K562 (cell line): ENCODE measurements at regions of chr6 and their contacts with region 1.

Region 1: DNA sequence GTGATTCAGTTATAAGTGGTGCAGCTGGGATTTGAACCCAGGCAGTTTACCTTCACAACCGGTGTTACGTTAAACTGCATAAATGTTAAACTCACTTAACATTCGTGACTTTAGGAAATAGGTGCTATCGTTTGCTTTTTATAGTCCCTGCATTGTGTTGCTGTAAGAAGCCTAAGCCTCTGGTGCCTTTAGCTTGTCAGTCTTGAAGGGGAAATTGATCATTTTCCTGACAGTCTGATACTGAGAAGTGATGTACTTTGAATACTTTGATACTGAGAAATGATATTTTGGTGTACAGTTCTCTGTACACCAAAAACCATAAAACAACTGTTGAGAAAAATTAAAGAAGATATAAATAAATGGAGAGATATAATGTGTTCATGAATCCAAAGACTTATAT is 52.5 kb upstream of the NEDD9 start:
- DNase-seq: no peak
- ATAC-seq: no peak
- H3K4me3 ChIP-seq: no peak overlapping the region
- H3K27ac ChIP-seq: no peak overlapping the region
- H3K4me1 ChIP-seq: no peaks in the 10 kb centered on the region
- H3K27me3 ChIP-seq: peaks cover 0 to 11% of the 10 kb centered on the region in 2 experiments; a peak in 3 of 5 replicates
- CTCF ChIP-seq: no peak
- EP300 ChIP-seq: no peak
- POLR2A ChIP-seq: no peak
- RAD21 ChIP-seq: no peak

Region 2: GRCh38 chr6:11309947-11310665 is 25.1 kb after region 1 on chr6:
- CTCF ChIA-PET with region 1: no interaction called
- POLR2A ChIA-PET with region 1: no interaction called
- in situ Hi-C with region 1: no loop called
- intact Hi-C with region 1: loop called (anchors 1 kb)
- DNase-seq: no peak
- ATAC-seq: no peak
- H3K4me3 ChIP-seq: no peak overlapping the region
- H3K27ac ChIP-seq: no peak overlapping the region
- H3K4me1 ChIP-seq: no peaks in the 10 kb centered on the region
- H3K27me3 ChIP-seq: peaks cover 0 to 10% of the 10 kb centered on the region in 2 experiments; a peak in 1 of 5 replicates
- CTCF ChIP-seq: peak in 1 of 3 experiments; percentile 40; a peak in 3 of 6 replicates
- EP300 ChIP-seq: no peak
- POLR2A ChIP-seq: no peak
- RAD21 ChIP-seq: no peak

Region 3: GRCh38 chr6:11363881-11364576 is 79.0 kb after region 1 on chr6:
- CTCF ChIA-PET with region 1: no interaction called
- POLR2A ChIA-PET with region 1: no interaction called
- in situ Hi-C with region 1: no loop called
- intact Hi-C with region 1: no loop called
- DNase-seq: no peak
- ATAC-seq: no peak
- H3K4me3 ChIP-seq: no peak overlapping the region
- H3K27ac ChIP-seq: no peak overlapping the region
- H3K4me1 ChIP-seq: no peaks in the 10 kb centered on the region
- H3K27me3 ChIP-seq: no peaks in the 10 kb centered on the region
- CTCF ChIP-seq: no peak
- EP300 ChIP-seq: no peak
- POLR2A ChIP-seq: no peak
- RAD21 ChIP-seq: no peak